Gastrocnemius medialis (tissue), 4 donors: ENCODE measurements at regions of chr3 and their contacts with region 1.

Region 1: DNA sequence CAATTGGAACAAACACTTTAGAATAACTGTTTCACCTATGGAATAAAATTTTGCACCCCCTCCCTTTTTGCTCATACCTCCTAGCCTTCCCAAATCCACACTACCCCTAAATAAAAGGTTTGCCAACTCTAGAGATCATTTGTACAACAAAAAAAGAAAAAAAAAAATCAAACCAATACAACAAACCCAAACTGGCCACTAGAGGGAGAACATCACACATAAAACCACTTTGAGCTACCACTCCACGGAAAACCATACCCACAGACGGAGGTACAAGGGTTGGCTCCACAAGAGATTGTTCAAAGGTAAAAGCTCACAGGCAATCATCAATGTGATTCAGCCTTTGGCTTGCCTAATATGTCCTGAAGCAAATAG is 47.6 kb downstream of the SETMAR start:
- DNase-seq: peak in 1 of 2 donors; percentile 18
- ATAC-seq: peak; percentile 82 to 87
- H3K4me3 ChIP-seq: peak overlapping the region in 2 of 4 donors; percentile 26 to 27
- H3K27ac ChIP-seq: peak overlapping the region in 1 of 4 donors; percentile 35
- H3K4me1 ChIP-seq: no peaks in the 10 kb centered on the region
- H3K27me3 ChIP-seq: no peaks in the 10 kb centered on the region
- CTCF ChIP-seq: peak; percentile 23 to 76 (median 51)
- POLR2A ChIP-seq: no peak

Region 2: GRCh38 chr3:4466741-4467521 is 116.2 kb after region 1 on chr3 and contains the start of gene SUMF1:
- in situ Hi-C with region 1: no loop called
- intact Hi-C with region 1: loop called (anchors 10 kb)
- DNase-seq: peak; percentile 53 to 70
- ATAC-seq: peak; percentile 98 to 99
- H3K4me3 ChIP-seq: peak within 1 kb of the TSS; percentile 82 to 93 (median 90)
- H3K27ac ChIP-seq: peak within 1 kb of the TSS; percentile 77 to 84 (median 84)
- H3K4me1 ChIP-seq: peaks cover 8 to 11% of the 10 kb centered on the region in 2 donors
- H3K27me3 ChIP-seq: no peaks in the 10 kb centered on the region
- CTCF ChIP-seq: no peak
- POLR2A ChIP-seq: peak; percentile 41 to 46
- total RNA-seq, gene SUMF1: 4.4 to 9.4 (median 7.6) TPM

Region 3: DNA sequence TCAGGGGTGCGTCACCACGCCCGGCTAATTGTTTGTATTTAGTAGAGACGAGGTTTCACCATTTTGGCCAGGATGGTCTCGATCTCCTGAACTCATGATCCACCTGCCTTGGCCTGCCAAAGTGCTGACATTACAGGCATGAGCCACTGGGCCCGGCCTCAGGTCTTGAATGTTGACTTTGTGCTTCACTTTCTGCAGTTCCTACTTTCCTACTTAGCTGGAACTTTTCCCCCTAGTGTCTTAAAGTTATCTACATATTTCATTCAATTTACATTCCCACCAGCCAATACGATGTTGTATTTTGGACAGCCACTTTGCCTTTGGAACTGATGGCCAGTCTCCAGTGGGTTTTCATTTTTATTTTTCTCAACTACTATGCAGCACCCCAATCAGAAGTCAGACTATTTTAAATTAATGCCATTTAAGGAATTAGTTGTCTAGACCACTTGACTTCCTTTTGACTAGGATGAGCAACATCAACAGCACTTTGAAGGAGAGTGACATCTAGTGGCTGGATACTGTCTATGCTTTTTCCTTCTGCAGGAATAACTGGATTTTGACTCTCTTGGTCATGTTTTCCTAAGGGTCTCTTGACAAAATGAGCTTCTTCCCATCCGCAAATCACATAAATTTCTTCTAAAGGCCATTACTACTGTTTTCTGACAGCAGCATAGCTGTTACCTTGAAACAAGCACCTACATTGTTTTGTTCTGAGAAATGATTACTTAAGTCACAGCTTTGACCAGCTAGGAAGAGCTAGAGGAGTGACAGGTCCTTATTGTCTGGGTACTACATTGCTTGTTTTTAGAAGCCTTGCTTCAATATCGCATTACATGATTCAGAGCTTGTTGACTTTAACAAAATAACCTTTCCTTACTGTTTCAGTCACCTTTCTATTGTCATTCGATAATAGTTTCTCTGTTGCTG is 282.6 kb after region 1 on chr3:
- in situ Hi-C with region 1: loop called (anchors 5 to 10 kb)
- intact Hi-C with region 1: loop called (anchors 1 kb)
- DNase-seq: no peak
- ATAC-seq: peak; percentile 47 to 58
- H3K4me3 ChIP-seq: no peak overlapping the region
- H3K27ac ChIP-seq: no peak overlapping the region
- H3K4me1 ChIP-seq: no peaks in the 10 kb centered on the region
- H3K27me3 ChIP-seq: no peaks in the 10 kb centered on the region
- CTCF ChIP-seq: peak; percentile 52 to 81 (median 64)
- POLR2A ChIP-seq: no peak